ENCODE measurements at regions of chr10 and their contacts with region 1.

Region 1: DNA sequence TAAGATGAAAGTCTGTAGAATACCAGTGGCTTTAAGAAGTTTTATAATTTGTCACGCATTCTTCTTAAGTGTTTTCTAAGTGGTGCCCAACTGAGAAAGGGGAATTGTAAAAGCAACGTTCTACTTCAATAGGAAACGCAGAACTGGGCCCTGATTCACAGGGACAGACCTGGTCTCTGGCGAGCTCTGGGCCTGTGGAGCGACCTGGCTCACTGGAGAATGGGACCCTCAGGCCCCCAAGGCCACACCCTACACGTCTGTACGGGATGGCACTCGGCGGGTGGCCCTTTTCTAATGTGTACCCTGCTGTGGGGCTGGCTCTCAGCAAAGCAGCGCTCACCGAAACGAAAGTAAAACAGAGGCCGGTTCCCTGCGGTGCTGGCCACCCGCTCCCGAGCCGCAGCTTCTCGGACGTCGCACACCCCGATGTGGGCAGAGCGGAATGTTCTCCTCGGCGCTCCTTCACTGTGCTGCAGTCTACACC is 205.0 kb downstream of the DIP2C start:
- DNase-seq: peak; percentile 36
- ATAC-seq: peak; percentile 82
- H3K4me3 ChIP-seq: peak overlapping the region; percentile 77
- H3K27ac ChIP-seq: no peak overlapping the region
- H3K4me1 ChIP-seq: no peaks in the 10 kb centered on the region
- H3K27me3 ChIP-seq: no peaks in the 10 kb centered on the region
- CTCF ChIP-seq: no peak

Region 2: DNA sequence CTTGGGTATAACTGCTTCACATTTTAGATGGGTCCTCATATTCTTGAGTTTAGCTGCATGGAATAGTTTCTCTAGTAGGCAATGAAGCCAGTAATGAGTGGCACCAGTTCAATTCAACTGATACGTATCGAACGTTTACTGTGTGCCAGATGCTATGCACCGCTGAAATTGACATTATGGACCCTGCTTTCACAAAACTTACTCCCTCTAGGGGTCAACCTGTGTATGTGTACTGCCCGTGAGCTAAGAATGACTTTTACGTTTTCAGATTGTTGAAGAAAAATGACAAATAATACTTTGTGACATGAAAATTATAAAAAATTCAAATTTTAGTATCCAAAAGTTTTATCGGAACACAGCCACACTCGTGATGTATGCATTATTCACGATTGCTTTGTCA is 253.7 kb before region 1 on chr10:
- CTCF ChIA-PET with region 1: no interaction called
- POLR2A ChIA-PET with region 1: no interaction called
- intact Hi-C with region 1: loop called (anchors 10 kb)
- DNase-seq: peak; percentile 27
- ATAC-seq: no peak; the same call in 1 of the 2 replicates
- H3K4me3 ChIP-seq: no peak overlapping the region
- H3K27ac ChIP-seq: no peak overlapping the region
- H3K4me1 ChIP-seq: no peaks in the 10 kb centered on the region
- H3K27me3 ChIP-seq: no peaks in the 10 kb centered on the region
- CTCF ChIP-seq: peak; percentile 60

Region 3: DNA sequence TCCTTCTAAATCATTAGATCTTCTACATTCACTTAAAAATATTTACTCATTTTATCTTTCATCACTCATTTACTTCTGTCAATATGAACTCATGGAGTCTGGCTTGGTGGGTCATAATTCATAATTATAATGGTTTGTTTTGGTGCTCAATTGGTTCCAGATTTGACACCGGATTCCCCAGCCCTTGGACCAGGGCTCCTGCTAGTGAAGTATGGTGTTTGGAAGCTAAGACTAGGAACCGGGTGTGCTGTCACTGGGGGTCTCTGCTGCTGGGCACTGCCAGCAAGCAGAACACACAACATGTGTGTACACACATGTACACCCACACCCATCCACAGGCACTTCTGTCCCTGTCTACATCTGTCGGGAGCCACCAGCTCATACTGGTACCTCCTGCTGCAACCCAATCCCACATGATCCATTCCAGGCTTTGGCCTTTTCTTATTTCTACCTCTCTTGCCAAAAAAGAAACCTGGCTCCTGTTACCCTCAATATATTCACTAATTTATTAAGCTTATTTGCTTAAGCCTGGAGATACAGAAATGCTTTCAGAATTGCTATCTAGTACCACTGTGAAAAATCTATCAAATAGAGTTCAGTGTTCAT is 41.1 kb before region 1 on chr10:
- CTCF ChIA-PET with region 1: no interaction called
- POLR2A ChIA-PET with region 1: no interaction called
- intact Hi-C with region 1: no loop called
- DNase-seq: no peak
- ATAC-seq: no peak
- H3K4me3 ChIP-seq: no peak overlapping the region
- H3K27ac ChIP-seq: no peak overlapping the region
- H3K4me1 ChIP-seq: no peaks in the 10 kb centered on the region
- H3K27me3 ChIP-seq: no peaks in the 10 kb centered on the region
- CTCF ChIP-seq: no peak